ENCODE measurements at regions of chr6 and their contacts with region 1.

Region 1: DNA sequence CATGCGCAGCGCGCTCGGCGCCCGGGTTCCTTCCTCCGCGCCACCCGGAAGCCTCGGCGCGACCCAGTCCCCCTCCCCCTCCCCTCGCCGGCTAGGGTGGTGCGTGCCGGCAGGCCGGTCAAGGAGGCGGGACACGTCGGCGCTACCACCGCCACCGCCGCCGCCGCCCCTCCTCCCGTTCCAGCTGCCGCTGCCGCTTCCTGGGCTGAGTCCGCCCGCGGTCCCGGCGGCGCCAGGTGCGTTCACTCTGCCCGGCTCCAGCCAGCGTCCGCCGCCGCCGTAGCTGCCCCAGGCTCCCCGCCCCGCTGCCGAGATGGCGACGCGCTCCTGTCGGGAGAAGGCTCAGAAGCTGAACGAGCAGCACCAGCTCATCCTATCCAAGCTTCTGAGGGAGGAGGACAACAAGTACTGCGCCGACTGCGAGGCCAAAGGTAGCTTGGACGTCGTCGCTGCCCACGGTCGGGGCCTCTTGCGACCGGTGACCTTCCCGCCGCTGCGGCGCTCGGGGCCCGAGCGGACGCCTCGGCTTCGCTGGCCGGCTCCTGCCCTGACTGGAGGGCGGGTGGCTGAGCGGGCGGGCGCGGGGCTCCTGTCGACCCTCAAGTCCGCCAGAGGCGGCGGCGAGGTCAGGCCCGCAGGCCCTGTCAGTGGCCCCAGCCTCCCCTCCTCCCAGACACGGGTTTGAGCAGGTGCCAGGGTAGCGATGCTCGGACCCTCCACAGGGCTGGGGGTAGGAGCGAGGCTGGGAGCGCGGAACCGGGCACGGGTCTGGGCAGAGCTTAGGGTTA is at the start of gene SMAP1:
- DNase-seq: peak; percentile 96
- ATAC-seq: peak; percentile 91
- H3K4me3 Mint-ChIP-seq: peak within 1 kb of the TSS; percentile 88
- H3K27ac Mint-ChIP-seq: peak within 1 kb of the TSS; percentile 84
- H3K4me1 Mint-ChIP-seq: peaks cover 48% of the 10 kb centered on the region
- H3K27me3 Mint-ChIP-seq: no peaks in the 10 kb centered on the region
- total RNA-seq, gene SMAP1: 39.7 to 40.2 TPM

Region 2: GRCh38 chr6:69791065-69791471 is 876.8 kb before region 1 on chr6:
- POLR2A ChIA-PET with region 1: no interaction called
- DNase-seq: no peak
- ATAC-seq: no peak
- H3K4me3 Mint-ChIP-seq: no peak overlapping the region
- H3K27ac Mint-ChIP-seq: no peak overlapping the region
- H3K4me1 Mint-ChIP-seq: peaks cover 28% of the 10 kb centered on the region
- H3K27me3 Mint-ChIP-seq: no peaks in the 10 kb centered on the region

Region 3: DNA sequence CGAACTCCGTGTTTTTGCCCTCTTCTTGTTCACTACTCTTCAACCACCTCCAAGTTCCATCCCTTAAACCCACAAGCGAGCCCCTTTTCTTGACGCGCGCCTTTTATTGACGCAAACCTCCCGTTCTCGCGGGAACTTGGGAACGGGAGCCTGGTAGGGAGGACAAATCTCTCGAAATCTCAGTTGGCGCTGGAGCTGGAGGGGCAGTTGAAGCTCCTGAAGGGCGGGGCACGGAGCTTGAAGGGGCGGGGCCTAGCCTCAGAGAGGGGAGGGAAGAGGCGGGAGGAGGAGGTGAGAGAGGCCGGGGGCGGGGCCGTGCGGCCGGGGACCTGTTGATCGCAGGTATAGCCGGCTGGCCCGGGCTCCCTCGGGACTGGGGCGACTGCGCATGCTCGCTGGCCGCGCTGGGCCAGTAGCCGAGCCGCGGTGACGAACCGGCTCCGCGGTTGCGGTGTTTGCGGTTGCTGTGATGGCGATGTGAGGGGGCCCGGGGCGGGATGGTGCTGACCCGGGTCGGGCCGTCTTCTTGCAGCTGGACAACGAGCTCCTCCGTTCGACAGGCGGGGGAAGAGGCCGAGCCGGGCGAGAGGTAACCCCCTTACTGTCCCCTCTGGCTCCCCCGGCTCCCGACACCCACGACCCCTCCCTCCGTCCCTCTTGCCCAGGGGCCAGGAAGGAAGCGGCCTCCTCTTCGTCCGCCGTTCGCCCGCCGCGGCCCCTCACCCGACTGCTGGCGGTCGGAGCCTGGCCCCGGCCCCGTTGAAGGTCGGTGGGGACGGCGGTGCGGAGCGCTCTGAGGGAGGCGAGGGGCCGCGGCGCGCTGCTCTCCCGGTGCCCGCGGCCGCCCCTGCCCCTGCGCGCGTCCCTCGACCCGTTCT is 254.6 kb before region 1 on chr6 and contains the start of gene FAM135A:
- POLR2A ChIA-PET with region 1: interaction called, 11 read pairs
- DNase-seq: peak; percentile 96
- ATAC-seq: peak; percentile 94
- H3K4me3 Mint-ChIP-seq: peak within 1 kb of the TSS; percentile 93
- H3K27ac Mint-ChIP-seq: peak within 1 kb of the TSS; percentile 88
- H3K4me1 Mint-ChIP-seq: peaks cover 16% of the 10 kb centered on the region
- H3K27me3 Mint-ChIP-seq: no peaks in the 10 kb centered on the region
- total RNA-seq, gene FAM135A: 7.5 to 7.9 TPM

Region 4: GRCh38 chr6:70547313-70547712 is 120.6 kb before region 1 on chr6:
- POLR2A ChIA-PET with region 1: no interaction called
- DNase-seq: no peak
- ATAC-seq: peak; percentile 50
- H3K4me3 Mint-ChIP-seq: no peak overlapping the region
- H3K27ac Mint-ChIP-seq: no peak overlapping the region
- H3K4me1 Mint-ChIP-seq: no peaks in the 10 kb centered on the region
- H3K27me3 Mint-ChIP-seq: no peaks in the 10 kb centered on the region

Region 5: DNA sequence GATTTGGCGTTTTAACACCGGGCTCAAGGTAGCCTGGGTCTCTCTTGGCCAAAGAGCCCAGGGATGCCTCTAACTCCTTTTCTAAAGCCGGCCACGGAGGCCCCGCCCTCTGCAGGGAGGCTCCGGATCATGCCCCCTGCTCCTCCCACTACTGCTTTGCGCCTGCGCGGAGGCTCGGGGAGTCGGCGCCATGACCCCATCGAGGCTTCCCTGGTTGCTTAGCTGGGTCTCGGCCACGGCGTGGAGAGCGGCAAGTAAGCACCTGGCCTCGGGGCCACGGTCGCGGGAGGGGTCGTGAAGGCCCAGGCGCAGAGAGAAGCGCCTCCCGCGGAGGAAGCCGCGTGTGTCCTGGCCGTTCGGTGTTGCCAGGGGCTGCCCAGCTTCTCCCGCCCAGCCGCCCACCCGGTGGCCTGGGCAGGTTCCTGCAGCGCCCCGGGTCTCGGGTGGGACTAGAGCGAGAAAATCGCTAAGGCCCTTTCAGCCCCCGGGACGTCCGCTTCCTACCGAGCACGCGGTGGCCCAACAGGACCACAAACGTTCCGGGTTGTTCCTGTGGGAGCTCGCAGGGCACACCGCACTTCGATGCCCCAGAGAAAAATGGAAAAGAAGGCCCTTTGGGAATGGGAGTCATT is 101.0 kb before region 1 on chr6 and contains the start of gene SDHAF4:
- POLR2A ChIA-PET with region 1: interaction called, 25 read pairs
- DNase-seq: peak; percentile 96
- ATAC-seq: peak; percentile 100
- H3K4me3 Mint-ChIP-seq: peak within 1 kb of the TSS; percentile 89
- H3K27ac Mint-ChIP-seq: peak within 1 kb of the TSS; percentile 83
- H3K4me1 Mint-ChIP-seq: peaks cover 10% of the 10 kb centered on the region
- H3K27me3 Mint-ChIP-seq: no peaks in the 10 kb centered on the region
- total RNA-seq, gene SDHAF4: 13.9 to 15.9 TPM

Region 6: GRCh38 chr6:70599187-70599586 is 68.7 kb before region 1 on chr6:
- POLR2A ChIA-PET with region 1: interaction called, 11 read pairs
- DNase-seq: peak; percentile 43
- ATAC-seq: peak; percentile 97
- H3K4me3 Mint-ChIP-seq: peak overlapping the region; percentile 46
- H3K27ac Mint-ChIP-seq: peak overlapping the region; percentile 43
- H3K4me1 Mint-ChIP-seq: peaks cover 18% of the 10 kb centered on the region
- H3K27me3 Mint-ChIP-seq: no peaks in the 10 kb centered on the region

Region 7: DNA sequence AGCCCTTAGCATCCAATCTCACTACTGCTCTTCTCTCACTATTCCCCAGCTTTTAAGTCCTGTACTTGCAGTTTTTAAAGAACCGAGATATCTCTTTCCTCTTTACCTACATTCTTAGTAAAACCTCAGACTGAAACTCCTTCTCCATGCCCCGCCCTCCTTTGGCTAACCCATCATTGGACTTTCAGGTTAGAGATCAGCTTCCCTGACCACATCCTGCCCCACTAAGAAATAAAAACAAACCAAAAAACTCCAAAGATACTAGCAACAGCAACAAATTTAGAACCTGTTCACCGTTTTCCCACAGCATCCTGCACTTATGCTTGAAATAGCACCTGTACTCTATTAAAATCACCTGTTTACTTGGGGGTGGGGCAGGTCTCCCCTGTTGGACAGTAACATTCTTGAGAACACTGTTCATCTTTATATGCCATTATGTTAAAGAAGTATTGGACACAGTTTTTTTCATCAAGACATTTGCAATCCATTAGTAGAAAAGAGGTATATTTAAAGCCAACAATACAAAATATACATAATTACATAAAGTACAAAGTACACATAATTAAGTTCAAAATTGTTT is 16.5 kb before region 1 on chr6:
- POLR2A ChIA-PET with region 1: interaction called, 21 read pairs
- DNase-seq: peak; percentile 55
- ATAC-seq: peak; percentile 91
- H3K4me3 Mint-ChIP-seq: peak overlapping the region; percentile 72
- H3K27ac Mint-ChIP-seq: peak overlapping the region; percentile 75
- H3K4me1 Mint-ChIP-seq: peaks cover 31% of the 10 kb centered on the region
- H3K27me3 Mint-ChIP-seq: peaks cover 2% of the 10 kb centered on the region

Region 8: GRCh38 chr6:70955441-70956190 is 287.7 kb after region 1 on chr6:
- POLR2A ChIA-PET with region 1: no interaction called
- DNase-seq: peak; percentile 91
- ATAC-seq: peak; percentile 90
- H3K4me3 Mint-ChIP-seq: peak overlapping the region; percentile 68
- H3K27ac Mint-ChIP-seq: no peak overlapping the region
- H3K4me1 Mint-ChIP-seq: peaks cover 8% of the 10 kb centered on the region
- H3K27me3 Mint-ChIP-seq: peaks cover 69% of the 10 kb centered on the region